Natural killer cell (primary cell): ENCODE measurements at regions of chr5 and their contacts with region 1.

Region 1: GRCh38 chr5:142713121-142713706 is 27.3 kb upstream of the FGF1 start:
- DNase-seq: peak; percentile 83 to 93
- ATAC-seq: peak; percentile 92 to 93 (median 93)
- H3K4me3 ChIP-seq: peak overlapping the region; percentile 26
- H3K4me3 Mint-ChIP-seq: peak overlapping the region; percentile 75
- H3K27ac ChIP-seq: no peak overlapping the region
- H3K27ac Mint-ChIP-seq: peak overlapping the region; percentile 64 to 81
- H3K4me1 ChIP-seq: peaks cover 36% of the 10 kb centered on the region
- H3K4me1 Mint-ChIP-seq: peaks cover 43 to 44% of the 10 kb centered on the region in 2 donors
- H3K27me3 ChIP-seq: no peaks in the 10 kb centered on the region
- H3K27me3 Mint-ChIP-seq: peaks cover 0 to 7% of the 10 kb centered on the region in 2 donors
- CTCF ChIP-seq: peak; percentile 99

Region 2: DNA sequence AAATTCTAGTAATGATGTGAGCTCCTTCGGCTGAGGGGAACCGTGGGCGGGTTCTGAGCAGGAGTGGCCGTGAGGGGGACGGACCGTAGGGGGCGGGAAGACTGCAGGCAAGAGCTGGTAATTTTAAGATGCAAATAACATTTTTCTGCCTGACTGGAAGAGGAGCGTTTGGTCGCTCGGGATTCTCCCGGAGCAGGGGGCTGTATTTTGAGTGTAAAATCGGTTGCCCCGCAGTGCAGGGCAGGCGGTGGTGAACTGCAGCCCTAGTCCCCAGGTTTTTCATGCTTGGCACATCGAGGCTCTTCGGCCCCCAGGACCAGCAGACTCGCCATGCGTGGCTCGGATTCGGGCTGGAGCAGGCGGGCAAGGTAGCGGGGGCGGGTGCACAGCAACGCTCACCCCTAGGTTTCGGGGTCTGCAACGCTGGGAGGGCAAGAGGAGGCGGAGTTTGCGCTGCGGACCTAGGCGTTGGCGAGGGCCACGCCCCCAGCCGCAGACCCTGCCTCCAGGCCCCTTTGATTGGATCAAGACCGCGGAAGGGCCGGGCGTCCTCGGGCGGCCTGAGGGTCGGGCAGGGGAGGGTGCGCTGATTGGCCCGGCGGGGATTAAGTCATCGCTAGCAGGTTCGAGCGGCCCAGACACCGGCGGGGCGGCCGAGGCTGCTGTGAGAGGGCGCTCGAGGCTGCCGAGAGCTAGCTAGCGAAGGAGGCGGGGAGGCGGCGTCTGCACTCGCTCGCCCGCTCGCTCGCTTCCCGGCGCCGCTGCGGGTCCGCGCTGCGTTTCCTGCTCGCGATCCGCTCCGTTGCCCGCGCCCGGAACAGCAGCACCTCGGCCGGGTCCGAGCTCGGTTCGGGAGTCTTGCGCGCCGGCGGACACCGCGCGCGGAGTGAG is 56.8 kb after region 1 on chr5 and contains the start of gene ARHGAP26:
- intact Hi-C with region 1: no loop called
- DNase-seq: peak; percentile 93 to 95
- ATAC-seq: peak; percentile 89 to 97 (median 91)
- H3K4me3 ChIP-seq: peak within 1 kb of the TSS; percentile 80
- H3K4me3 Mint-ChIP-seq: peak within 1 kb of the TSS; percentile 99
- H3K27ac ChIP-seq: peak within 1 kb of the TSS; percentile 77
- H3K27ac Mint-ChIP-seq: peak within 1 kb of the TSS; percentile 88 to 94
- H3K4me1 ChIP-seq: peaks cover 21% of the 10 kb centered on the region
- H3K4me1 Mint-ChIP-seq: peaks cover 51 to 52% of the 10 kb centered on the region in 2 donors
- H3K27me3 ChIP-seq: no peaks in the 10 kb centered on the region
- H3K27me3 Mint-ChIP-seq: no peaks in the 10 kb centered on the region
- CTCF ChIP-seq: no peak
- total RNA-seq, gene ARHGAP26: 153 to 159 (median 158) TPM

Region 3: DNA sequence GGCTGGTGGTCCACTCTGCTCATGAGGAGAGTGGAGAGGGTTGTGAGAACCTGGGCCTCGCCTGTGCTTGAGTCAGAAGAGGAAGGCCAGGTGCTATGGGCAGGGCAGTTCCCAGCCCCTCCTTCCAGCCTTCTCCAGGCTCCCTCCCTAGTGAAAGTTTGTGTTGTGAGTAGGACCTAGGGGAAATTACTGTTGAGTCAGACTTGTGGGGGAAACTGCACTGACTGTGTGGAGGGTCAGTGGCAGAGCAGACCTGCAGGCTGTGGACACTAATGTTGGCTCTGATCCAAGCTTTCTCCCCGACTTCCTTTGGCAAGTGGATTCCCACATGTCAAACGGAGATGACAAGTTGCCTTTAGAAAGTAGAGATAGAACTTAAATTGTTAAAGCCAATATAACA is 159.6 kb after region 1 on chr5:
- intact Hi-C with region 1: loop called (anchors 1 kb)
- DNase-seq: no peak
- ATAC-seq: no peak
- H3K4me3 ChIP-seq: no peak overlapping the region
- H3K4me3 Mint-ChIP-seq: no peak overlapping the region
- H3K27ac ChIP-seq: no peak overlapping the region
- H3K27ac Mint-ChIP-seq: no peak overlapping the region
- H3K4me1 ChIP-seq: no peaks in the 10 kb centered on the region
- H3K4me1 Mint-ChIP-seq: peaks cover 30 to 45% of the 10 kb centered on the region in 2 donors
- H3K27me3 ChIP-seq: no peaks in the 10 kb centered on the region
- H3K27me3 Mint-ChIP-seq: no peaks in the 10 kb centered on the region
- CTCF ChIP-seq: no peak

Region 4: DNA sequence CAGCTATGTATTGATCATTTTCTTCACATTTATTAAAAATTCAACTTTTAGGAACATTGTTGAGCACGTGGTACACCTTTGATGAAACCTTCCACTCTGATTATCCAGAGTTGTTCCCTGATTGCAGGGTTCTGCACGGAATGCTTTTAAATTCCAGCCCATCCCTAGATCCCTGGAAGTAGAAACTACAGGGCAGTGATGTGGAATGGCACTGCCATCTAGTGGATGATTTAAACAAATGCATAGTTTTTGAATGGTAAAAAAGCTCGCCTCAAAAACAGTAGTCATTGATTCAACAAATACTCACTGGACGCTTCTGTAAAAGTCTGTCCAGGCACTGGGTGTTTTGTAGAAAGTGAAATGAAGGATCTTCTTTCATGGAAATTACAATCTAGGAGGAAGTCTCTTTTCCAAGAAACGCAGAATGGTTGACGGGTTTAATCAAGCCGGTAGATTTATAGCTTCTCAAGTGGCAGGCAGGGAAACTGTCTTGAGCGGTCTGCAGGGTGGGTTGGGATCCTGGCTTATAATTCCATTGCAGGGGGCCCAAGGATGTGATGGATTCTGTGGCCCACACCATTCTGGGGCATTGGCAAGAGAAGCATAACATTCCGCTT is 175.4 kb after region 1 on chr5:
- intact Hi-C with region 1: loop called (anchors 2 kb)
- DNase-seq: peak in 1 of 2 donors; percentile 60
- ATAC-seq: peak in 2 of 3 donors; percentile 54 to 62
- H3K4me3 ChIP-seq: no peak overlapping the region
- H3K4me3 Mint-ChIP-seq: no peak overlapping the region
- H3K27ac ChIP-seq: no peak overlapping the region
- H3K27ac Mint-ChIP-seq: no peak overlapping the region
- H3K4me1 ChIP-seq: peaks cover 2% of the 10 kb centered on the region
- H3K4me1 Mint-ChIP-seq: peaks cover 53 to 58% of the 10 kb centered on the region in 2 donors
- H3K27me3 ChIP-seq: no peaks in the 10 kb centered on the region
- H3K27me3 Mint-ChIP-seq: no peaks in the 10 kb centered on the region
- CTCF ChIP-seq: peak; percentile 79

Region 5: DNA sequence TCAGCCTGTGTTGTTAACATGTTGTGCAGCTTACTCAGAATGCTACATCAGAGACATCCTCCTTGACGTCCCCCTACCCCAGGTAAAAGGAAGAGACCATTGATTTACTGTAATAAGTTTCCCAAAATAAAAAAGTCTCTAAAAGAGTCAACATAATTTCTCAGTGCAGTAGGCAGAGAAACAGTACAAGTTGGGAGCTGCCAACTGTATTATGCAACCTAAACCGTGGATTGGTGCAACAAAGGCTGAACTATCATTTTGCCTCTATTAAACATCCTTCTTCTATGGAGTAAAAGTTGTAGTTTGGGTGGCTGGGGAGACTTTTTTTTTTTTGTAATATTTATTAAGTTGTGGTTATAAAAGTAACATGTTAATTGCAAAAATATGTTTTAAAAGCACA is 482.3 kb after region 1 on chr5:
- intact Hi-C with region 1: no loop called
- DNase-seq: no peak
- ATAC-seq: no peak
- H3K4me3 ChIP-seq: no peak overlapping the region
- H3K4me3 Mint-ChIP-seq: no peak overlapping the region
- H3K27ac ChIP-seq: no peak overlapping the region
- H3K27ac Mint-ChIP-seq: no peak overlapping the region
- H3K4me1 ChIP-seq: no peaks in the 10 kb centered on the region
- H3K4me1 Mint-ChIP-seq: peaks cover 27 to 29% of the 10 kb centered on the region in 2 donors
- H3K27me3 ChIP-seq: no peaks in the 10 kb centered on the region
- H3K27me3 Mint-ChIP-seq: no peaks in the 10 kb centered on the region
- CTCF ChIP-seq: no peak